ENCODE measurements at regions of chr4 and their contacts with region 1.

Region 1: DNA sequence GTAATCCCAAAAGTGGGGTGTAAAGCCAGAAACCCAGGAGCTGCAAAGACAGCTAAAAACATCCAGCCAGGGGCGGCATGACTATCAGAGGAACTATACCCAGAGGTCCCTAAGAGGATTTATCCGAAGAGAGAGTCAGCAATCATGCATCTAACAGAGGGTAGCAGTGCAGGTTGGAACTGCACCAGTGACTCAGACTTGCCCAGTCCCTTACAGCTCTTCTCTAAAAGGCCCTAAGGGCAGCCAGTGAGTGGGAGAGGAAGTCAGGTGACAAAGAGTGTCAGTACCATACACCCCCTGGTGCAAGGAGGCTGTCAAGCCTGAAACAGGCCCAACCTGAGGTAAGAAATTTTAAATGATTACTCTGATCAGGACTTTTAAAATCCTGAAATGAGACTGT is 88.1 kb downstream of the CAMK2D start:
- DNase-seq: no peak
- H3K4me3 ChIP-seq: no peak overlapping the region
- H3K27ac ChIP-seq: peak overlapping the region; percentile 3 to 10
- H3K4me1 ChIP-seq: peaks cover 0 to 77% (median 31%) of the 10 kb centered on the region in 4 donors
- H3K27me3 ChIP-seq: no peaks in the 10 kb centered on the region
- CTCF ChIP-seq: no peak

Region 2: DNA sequence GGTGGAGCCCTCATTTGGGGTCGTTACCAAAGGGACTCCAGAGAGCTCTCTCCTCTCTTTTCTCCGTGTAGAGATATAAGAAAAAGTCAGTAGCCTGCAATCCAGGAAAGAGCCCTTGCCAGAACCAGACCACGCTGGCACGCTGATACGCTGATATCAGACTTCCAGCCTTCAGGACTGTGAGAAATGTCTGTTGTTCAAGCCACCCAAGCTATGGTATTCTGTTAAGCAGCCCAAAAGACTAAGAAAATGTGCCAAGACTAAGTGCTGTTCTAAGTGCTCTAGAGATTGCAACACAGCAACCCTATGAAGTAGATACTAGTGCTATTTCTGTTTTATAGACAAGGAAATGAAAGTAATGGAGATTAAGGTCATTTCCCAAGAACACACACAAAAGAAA is 117.6 kb before region 1 on chr4:
- intact Hi-C with region 1: loop called (anchors 10 kb)
- DNase-seq: peak in 1 of 2 donors; percentile 66
- H3K4me3 ChIP-seq: peak overlapping the region in 1 of 2 donors; percentile 7
- H3K27ac ChIP-seq: peak overlapping the region; percentile 45 to 54
- H3K4me1 ChIP-seq: peaks cover 0 to 17% (median 7%) of the 10 kb centered on the region in 4 donors
- H3K27me3 ChIP-seq: no peaks in the 10 kb centered on the region
- CTCF ChIP-seq: no peak

Measured in tibial artery (tissue), 4 donors.